Colonic mucosa (tissue), 4 donors: ENCODE measurements at regions of chr1 and their contacts with region 1.

Region 1: GRCh38 chr1:212558693-212559480 is 49.7 kb upstream of the ATF3 start:
- DNase-seq: peak; percentile 93
- H3K4me3 ChIP-seq: peak overlapping the region; percentile 61
- H3K27ac ChIP-seq: peak overlapping the region; percentile 82
- H3K4me1 ChIP-seq: no peaks in the 10 kb centered on the region
- H3K27me3 ChIP-seq: no peaks in the 10 kb centered on the region
- CTCF ChIP-seq: no peak

Region 2: DNA sequence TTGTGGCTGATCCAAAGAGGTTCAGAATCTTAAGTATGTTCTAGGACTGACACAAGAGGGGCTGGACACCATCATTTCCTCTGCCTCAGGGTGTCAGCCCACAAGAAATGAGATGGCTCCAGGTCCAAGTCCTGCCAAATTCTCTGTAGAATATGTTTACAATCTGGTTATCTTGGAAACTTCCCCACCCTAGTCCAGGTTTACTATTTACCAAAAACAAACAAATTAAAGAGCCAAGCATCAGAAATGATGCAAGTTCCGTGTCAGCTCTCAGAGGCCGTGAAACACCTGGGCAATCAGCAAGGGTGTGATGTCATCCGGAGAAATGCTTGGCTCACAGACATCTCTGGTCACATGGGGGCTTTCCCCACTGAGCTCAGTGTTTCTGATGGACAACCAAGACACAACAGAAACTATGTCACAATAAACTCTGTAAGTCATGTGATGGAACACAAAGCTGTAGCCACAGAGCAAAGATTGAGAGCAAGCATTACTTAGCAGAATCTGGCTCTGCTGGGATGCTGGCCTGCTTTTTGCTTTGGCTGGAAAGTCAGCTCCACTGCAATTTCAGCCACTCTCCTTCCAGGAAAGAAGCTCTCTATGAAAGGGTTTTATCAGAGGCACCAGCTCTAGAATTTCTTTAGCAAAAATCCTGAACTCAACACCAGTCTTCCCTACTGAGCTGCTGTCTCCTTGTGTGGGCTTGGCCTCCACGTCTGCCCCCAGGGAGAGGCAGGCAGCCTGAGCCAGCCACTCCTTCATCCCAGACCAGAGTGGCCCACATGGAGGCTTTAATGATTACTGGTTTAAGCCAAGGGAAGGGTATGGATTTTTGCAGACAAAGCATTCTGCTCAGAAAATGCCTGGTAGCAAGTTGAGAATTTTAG is 70.2 kb before region 1 on chr1:
- intact Hi-C with region 1: loop called (anchors 10 kb)
- DNase-seq: peak; percentile 67
- H3K4me3 ChIP-seq: no peak overlapping the region
- H3K27ac ChIP-seq: no peak overlapping the region
- H3K4me1 ChIP-seq: no peaks in the 10 kb centered on the region
- H3K27me3 ChIP-seq: no peaks in the 10 kb centered on the region
- CTCF ChIP-seq: no peak

Region 3: DNA sequence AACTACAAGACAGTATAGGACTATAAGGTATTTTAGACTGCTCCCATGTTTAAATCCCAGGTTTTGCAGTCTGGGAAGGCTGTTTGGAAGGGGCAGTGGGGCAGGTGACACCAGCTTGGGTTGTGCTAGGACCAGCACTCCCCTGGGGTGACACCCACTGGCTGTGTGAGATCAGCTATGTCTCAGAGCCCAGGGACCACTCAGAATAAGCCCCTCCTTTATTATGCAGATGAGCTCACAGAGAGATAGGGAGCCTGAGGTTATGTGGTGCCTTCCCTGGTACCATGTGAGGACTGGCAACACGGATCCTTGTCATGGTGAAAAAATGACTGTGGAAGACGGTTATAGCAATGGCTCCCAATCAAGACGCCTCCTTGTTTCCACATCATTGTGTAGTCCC is 55.2 kb before region 1 on chr1:
- intact Hi-C with region 1: no loop called
- DNase-seq: no peak
- H3K4me3 ChIP-seq: no peak overlapping the region
- H3K27ac ChIP-seq: no peak overlapping the region
- H3K4me1 ChIP-seq: no peaks in the 10 kb centered on the region
- H3K27me3 ChIP-seq: no peaks in the 10 kb centered on the region
- CTCF ChIP-seq: no peak